ENCODE measurements at regions of chr6 and their contacts with region 1.

Region 1: DNA sequence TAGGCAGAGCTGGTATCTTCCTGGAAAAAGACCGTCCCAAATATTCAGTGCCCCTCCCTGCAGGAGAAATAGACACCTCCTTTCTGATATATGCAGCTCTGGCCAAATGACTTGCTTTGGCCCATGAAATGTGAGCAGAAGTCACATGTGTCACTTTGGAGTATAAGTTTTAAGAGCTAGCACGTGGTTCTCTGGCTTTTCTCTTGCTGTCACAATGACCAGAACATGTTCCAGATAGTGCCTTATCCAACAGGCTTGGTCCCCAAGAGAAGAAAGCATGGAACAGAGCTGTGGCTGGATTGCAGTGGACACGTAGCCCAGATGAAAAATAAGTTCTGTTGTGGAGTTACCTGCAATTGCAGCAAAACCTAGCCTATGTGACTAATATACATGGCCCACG is 40.4 kb downstream of the UNC5CL start:
- DNase-seq: no peak
- H3K4me3 ChIP-seq: no peak overlapping the region
- H3K27ac ChIP-seq: no peak overlapping the region
- H3K4me1 ChIP-seq: peaks cover 0 to 33% (median 29%) of the 10 kb centered on the region in 4 donors
- H3K27me3 ChIP-seq: no peaks in the 10 kb centered on the region
- CTCF ChIP-seq: no peak
- EP300 ChIP-seq: no peak
- POLR2A ChIP-seq: no peak

Region 2: DNA sequence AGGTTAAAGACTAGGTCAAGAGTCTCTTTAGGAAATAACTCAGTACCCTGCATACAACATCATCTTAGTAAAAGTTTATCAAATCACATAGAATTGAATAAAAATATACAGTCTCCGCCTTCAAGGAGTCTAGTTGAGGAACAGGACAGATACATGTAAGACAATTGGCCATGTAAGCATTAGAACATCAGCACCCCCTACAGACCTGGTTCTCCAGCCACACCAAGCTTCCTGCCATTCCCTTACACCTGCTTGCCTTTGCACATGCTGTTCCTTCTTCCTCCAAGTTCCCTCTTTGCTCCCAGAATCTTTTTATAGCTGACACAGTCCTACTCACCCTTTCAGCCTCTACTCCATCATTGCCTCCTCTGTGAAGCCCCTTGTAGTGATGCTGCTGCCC is 223.7 kb before region 1 on chr6:
- intact Hi-C with region 1: no loop called
- DNase-seq: no peak
- H3K4me3 ChIP-seq: no peak overlapping the region
- H3K27ac ChIP-seq: no peak overlapping the region
- H3K4me1 ChIP-seq: no peaks in the 10 kb centered on the region
- H3K27me3 ChIP-seq: no peaks in the 10 kb centered on the region
- CTCF ChIP-seq: no peak
- EP300 ChIP-seq: no peak
- POLR2A ChIP-seq: no peak

Region 3: GRCh38 chr6:40962241-40962640 is 36.4 kb before region 1 on chr6:
- intact Hi-C with region 1: loop called (anchors 1 kb)
- DNase-seq: no peak
- H3K4me3 ChIP-seq: no peak overlapping the region
- H3K27ac ChIP-seq: no peak overlapping the region
- H3K4me1 ChIP-seq: peaks cover 0 to 8% (median 4%) of the 10 kb centered on the region in 4 donors
- H3K27me3 ChIP-seq: no peaks in the 10 kb centered on the region
- CTCF ChIP-seq: no peak
- EP300 ChIP-seq: no peak
- POLR2A ChIP-seq: no peak